ENCODE measurements at regions of chr22 and their contacts with region 1.

Region 1: DNA sequence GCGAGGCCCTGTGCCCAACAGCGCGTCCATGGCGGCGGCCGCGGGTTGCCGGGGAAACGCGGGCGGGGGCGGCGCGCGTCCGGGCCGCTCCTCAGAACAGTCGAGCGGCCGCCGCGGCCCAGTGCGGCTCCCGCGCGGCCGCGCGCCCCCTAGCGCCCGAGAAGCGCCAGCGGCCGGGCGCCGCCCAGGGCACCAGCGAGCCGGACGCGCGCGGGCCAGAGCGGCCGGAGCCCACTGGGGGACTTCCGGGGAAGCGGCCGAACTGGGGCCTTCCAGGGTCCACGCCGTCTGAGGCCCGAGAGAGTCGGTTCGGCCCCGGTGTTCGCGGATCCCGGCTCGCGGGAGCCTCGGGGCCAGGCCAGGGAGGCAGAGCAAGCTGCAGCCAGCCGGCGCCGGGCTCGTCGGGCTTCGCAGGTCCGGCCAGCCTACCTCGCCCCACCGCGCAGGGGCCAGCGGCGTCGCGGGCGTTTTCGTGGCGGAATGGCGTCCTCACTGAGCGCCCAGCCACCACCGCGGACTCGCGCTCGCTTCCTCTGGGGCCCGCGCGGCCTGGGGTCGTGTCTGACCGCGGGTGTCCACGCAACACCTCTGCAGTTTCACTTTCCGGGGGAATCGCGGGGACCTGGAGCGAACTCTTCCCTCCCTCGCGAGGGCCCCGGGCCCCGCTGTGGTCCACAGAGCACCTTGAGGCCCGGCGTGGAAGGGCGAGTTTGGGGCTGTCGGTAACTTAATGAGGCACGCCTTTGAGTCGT is at the start of gene DENND6B:
- DNase-seq: peak; percentile 71 to 94 (median 86)
- ATAC-seq: peak; percentile 89 to 95 (median 92)
- H3K4me3 ChIP-seq: peak within 1 kb of the TSS; percentile 61 to 87 (median 78)
- H3K27ac ChIP-seq: peak within 1 kb of the TSS; percentile 89 to 95 (median 92)
- H3K4me1 ChIP-seq: peaks cover 4 to 11% (median 9%) of the 10 kb centered on the region in 3 donors
- H3K27me3 ChIP-seq: no peaks in the 10 kb centered on the region
- CTCF ChIP-seq: peak in 3 of 4 donors; percentile 17 to 40 (median 35)
- total RNA-seq, gene DENND6B: 4.3 to 9.5 (median 5.4) TPM

Region 2: DNA sequence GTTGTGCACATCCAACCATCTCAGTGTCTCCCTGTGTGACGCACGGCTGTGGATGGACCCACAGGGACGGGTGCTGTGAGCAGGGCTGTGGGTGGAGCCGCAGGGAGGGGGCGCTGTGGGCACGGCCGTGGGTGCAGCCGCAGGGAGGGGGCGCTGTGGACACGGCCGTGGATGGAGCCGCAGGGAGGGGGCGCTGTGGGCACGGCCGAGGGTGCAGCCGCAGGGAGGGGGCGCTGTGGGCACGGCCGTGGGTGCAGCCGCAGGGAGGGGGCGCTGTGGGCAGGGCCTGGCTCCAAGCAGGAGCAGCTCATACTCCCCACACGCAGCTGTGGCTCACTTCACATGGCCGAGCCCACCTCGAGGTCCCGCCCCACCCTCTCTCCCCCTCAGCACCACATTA is 51.0 kb before region 1 on chr22:
- intact Hi-C with region 1: loop called in 2 of 3 experiments (anchors 5 to 10 kb)
- DNase-seq: peak in 5 of 6 donors; percentile 51 to 77 (median 59)
- ATAC-seq: peak; percentile 39 to 67 (median 64)
- H3K4me3 ChIP-seq: no peak overlapping the region
- H3K27ac ChIP-seq: no peak overlapping the region
- H3K4me1 ChIP-seq: peaks cover 4 to 9% (median 8%) of the 10 kb centered on the region in 3 donors
- H3K27me3 ChIP-seq: no peaks in the 10 kb centered on the region
- CTCF ChIP-seq: peak in 2 of 4 donors; percentile 25 to 27

Region 3: GRCh38 chr22:50423042-50423815 is 96.1 kb after region 1 on chr22:
- intact Hi-C with region 1: no loop called
- DNase-seq: peak in 1 of 6 donors; percentile 60
- ATAC-seq: no peak
- H3K4me3 ChIP-seq: no peak overlapping the region
- H3K27ac ChIP-seq: no peak overlapping the region
- H3K4me1 ChIP-seq: no peaks in the 10 kb centered on the region
- H3K27me3 ChIP-seq: no peaks in the 10 kb centered on the region
- CTCF ChIP-seq: no peak

Region 4: DNA sequence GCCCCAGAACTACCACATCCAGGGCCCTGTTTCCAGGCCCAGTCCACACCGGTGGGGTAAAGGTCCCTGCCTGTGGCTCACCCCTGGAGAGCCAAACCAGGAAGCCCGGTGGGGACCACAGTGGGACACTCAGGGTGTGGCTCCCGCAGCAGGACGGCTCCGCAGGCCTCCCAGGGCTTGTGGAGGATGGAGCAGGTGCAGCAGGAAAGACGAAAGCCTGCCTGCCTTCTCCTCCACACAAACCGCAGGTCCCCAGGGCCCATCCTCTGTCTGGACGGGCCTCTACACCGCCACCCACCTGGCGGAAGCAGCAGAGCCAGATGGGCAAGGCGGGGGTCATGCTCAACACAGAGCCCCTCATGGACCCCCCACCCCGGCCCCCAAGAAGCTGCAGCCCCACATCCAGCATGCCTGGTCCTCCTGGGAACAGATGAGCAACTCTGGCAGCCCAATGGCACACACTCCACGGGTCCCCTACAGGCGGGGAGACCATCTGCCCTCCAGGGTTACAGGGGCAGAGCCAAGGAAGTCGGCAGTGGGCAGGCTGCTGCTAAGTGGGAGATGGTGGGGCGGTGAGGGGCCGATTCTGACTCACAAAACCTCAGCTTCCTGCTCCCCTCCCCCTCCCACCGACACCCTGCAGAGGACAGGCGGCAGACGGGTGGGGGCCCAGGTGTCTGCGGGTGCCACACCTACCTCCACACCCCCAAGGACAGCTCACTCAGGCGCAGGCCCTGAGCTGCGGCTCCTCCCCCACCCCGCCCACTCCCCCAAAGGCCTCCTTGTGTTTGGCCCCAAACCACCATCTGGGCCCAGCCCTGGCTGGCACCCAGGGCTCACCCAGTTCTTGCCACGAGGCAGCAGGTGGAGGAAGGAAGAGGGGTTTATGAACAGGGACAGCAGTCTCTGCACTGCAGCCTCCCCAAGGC is 142.5 kb after region 1 on chr22:
- intact Hi-C with region 1: no loop called
- DNase-seq: peak in 5 of 6 donors; percentile 65 to 84 (median 71)
- ATAC-seq: peak; percentile 11 to 75 (median 52)
- H3K4me3 ChIP-seq: no peak overlapping the region
- H3K27ac ChIP-seq: peak overlapping the region in 1 of 4 donors; percentile 3
- H3K4me1 ChIP-seq: peaks cover 26 to 34% (median 33%) of the 10 kb centered on the region in 3 donors
- H3K27me3 ChIP-seq: no peaks in the 10 kb centered on the region
- CTCF ChIP-seq: no peak

Region 5: DNA sequence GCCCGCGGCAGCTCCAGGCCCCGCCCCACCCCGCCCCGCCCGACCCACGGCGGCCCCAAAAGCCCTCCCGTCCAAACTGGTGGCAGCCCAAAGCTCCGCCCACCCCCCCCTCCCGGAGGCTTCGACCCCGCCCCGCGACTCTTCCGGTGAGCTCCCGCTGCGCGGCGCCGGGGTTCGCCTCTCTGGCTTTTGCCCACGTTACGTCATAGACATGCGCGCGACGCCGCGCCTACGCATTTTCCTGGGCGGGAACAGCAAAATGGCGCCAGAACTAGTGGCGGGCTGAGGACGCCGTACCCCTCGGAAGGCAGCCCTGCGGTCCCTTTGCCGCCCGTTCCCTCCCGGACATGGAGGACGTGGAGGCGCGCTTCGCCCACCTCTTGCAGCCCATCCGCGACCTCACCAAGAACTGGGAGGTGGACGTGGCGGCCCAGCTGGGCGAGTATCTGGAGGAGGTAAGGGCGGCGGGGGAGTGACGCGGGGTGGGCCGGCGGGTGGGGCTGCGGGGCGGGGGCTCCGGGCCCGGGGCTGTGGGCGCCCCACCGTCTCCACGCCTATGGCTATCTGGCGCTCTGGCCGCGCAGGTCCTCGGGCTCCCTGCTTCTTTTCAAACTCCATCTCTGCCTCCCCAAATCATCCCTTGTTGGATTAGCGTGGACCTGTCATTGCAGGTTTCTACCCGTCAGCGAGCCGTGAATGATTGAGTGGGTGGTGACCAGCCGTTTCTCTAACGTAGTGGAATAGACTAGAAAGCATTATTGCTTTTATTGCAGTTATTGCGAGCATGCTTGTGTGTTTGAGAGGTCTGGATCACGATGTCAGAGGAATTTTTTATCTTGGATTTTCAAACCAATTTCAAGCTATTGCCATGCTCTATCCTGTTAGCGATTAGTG is 181.1 kb after region 1 on chr22 and contains the start of gene NCAPH2:
- intact Hi-C with region 1: no loop called
- DNase-seq: peak; percentile 95 to 99 (median 98)
- ATAC-seq: peak; percentile 46 to 80 (median 68)
- H3K4me3 ChIP-seq: peak within 1 kb of the TSS; percentile 68 to 90 (median 83)
- H3K27ac ChIP-seq: peak within 1 kb of the TSS; percentile 75 to 94 (median 85)
- H3K4me1 ChIP-seq: peaks cover 0 to 13% (median 0%) of the 10 kb centered on the region in 3 donors
- H3K27me3 ChIP-seq: no peaks in the 10 kb centered on the region
- CTCF ChIP-seq: no peak
- total RNA-seq, gene NCAPH2: 15.9 to 27.1 (median 23.0) TPM

Region 6: GRCh38 chr22:50641696-50642607 is 314.8 kb after region 1 on chr22:
- intact Hi-C with region 1: no loop called
- DNase-seq: no peak
- ATAC-seq: peak in 3 of 4 donors; percentile 23 to 46 (median 38)
- H3K4me3 ChIP-seq: no peak overlapping the region
- H3K27ac ChIP-seq: no peak overlapping the region
- H3K4me1 ChIP-seq: no peaks in the 10 kb centered on the region
- H3K27me3 ChIP-seq: no peaks in the 10 kb centered on the region
- CTCF ChIP-seq: no peak